ENCODE measurements at regions of chr12 and their contacts with region 1.

Region 1: GRCh38 chr12:10097521-10097920 is 1.3 kb downstream of the CLEC1A start:
- DNase-seq: no peak
- ATAC-seq: no peak

Region 2: DNA sequence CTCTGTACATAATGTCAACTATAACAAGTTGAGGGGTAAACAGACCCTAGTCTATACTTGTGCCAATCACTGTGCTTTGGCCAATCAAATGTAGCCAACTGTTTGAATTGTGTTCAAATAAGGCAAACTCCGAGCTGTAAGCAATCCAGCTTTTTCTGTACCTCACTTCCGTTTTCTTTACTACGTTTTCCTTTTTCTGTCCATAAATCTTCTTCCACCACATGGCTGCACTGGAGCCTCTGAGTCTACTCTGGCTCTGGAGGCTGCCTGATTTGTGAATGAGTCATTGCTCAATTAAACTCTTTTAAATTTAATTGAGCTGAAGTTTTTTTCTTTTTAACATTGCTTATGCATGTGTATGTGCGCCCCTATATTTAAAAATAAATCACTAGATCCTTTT is 28.4 kb before region 1 on chr12:
- intact Hi-C with region 1: loop called (anchors 2 kb)
- DNase-seq: no peak
- ATAC-seq: no peak